Heart left ventricle (tissue), 16 donors: ENCODE measurements at regions of chr7 and their contacts with region 1.

Region 1: GRCh38 chr7:92781117-92781720 is 55.2 kb downstream of the CDK6 start:
- DNase-seq: peak; percentile 41 to 58 (median 49)
- ATAC-seq: peak; percentile 73 to 94 (median 80)
- H3K4me3 ChIP-seq: no peak overlapping the region
- H3K27ac ChIP-seq: peak overlapping the region in 11 of 12 donors; percentile 1 to 57 (median 35)
- H3K4me1 ChIP-seq: peaks cover 0 to 63% (median 43%) of the 10 kb centered on the region in 12 donors
- H3K27me3 ChIP-seq: no peaks in the 10 kb centered on the region
- CTCF ChIP-seq: no peak
- POLR2A ChIP-seq: no peak

Region 2: GRCh38 chr7:92717993-92718716 is 63.1 kb before region 1 on chr7:
- intact Hi-C with region 1: loop called in 2 of 10 experiments (anchors 5 to 10 kb)
- DNase-seq: peak; percentile 43 to 71 (median 64)
- ATAC-seq: peak; percentile 76 to 92 (median 83)
- H3K4me3 ChIP-seq: peak overlapping the region in 11 of 12 donors; percentile 24 to 59 (median 44)
- H3K27ac ChIP-seq: peak overlapping the region; percentile 66 to 93 (median 90)
- H3K4me1 ChIP-seq: peaks cover 0 to 49% (median 18%) of the 10 kb centered on the region in 12 donors
- H3K27me3 ChIP-seq: no peaks in the 10 kb centered on the region
- CTCF ChIP-seq: no peak
- POLR2A ChIP-seq: no peak

Region 3: GRCh38 chr7:92727755-92728154 is 53.5 kb before region 1 on chr7:
- intact Hi-C with region 1: loop called in 2 of 10 experiments (anchors 5 to 10 kb)
- DNase-seq: no peak
- ATAC-seq: no peak
- H3K4me3 ChIP-seq: no peak overlapping the region
- H3K27ac ChIP-seq: no peak overlapping the region
- H3K4me1 ChIP-seq: peaks cover 0 to 53% (median 27%) of the 10 kb centered on the region in 12 donors
- H3K27me3 ChIP-seq: no peaks in the 10 kb centered on the region
- CTCF ChIP-seq: no peak
- POLR2A ChIP-seq: no peak

Region 4: GRCh38 chr7:93030605-93031225 is 249.5 kb after region 1 on chr7:
- intact Hi-C with region 1: no loop called
- DNase-seq: no peak
- ATAC-seq: no peak
- H3K4me3 ChIP-seq: no peak overlapping the region
- H3K27ac ChIP-seq: no peak overlapping the region
- H3K4me1 ChIP-seq: no peaks in the 10 kb centered on the region
- H3K27me3 ChIP-seq: no peaks in the 10 kb centered on the region
- CTCF ChIP-seq: no peak
- POLR2A ChIP-seq: no peak